Activated CD8-positive, alpha-beta T cell treated with anti-CD3 and anti-CD28 coated beads, Interleukin-2, amount 10 ng/mL, durations not matched to agents 7 days and 5 days (primary cell): ENCODE measurements at regions of chr11 and their contacts with region 1.

Region 1: DNA sequence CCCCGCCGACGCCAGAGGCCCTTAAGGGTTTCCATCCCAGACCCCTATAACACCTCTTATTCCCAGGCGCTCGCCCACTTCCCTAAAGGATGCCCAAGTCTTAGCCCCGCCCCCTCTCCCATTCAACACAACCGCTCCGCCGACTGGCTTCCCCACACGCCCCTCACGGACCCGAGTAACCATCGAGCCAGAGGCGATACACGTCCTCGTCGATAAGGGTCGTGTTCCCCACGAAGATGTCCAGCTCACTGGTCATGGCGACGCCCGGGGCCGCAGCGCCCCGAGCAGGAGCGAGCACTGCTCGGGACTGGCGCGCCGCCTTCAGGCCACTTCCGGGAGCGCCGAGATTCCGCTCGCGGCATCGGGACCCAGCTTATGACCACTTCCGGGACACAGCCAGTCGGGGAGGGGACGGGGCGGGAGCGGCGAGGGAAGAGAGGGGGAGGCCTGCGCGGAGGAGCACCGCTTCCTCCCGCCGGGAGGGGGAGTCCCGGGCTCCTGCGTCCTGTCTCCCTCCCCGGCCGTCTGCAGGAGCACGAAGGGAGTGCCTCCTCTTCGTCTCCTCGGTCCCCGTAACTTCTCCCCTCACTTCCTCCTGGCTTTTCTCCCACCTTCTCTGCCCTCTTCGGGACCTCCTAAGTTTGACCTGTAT is at the start of gene FIBP:
- DNase-seq: peak; percentile 98
- ATAC-seq: peak; percentile 62
- H3K4me3 Mint-ChIP-seq: peak within 1 kb of the TSS; percentile 98
- H3K27ac Mint-ChIP-seq: peak within 1 kb of the TSS; percentile 96
- H3K4me1 Mint-ChIP-seq: peaks cover 70% of the 10 kb centered on the region
- H3K27me3 Mint-ChIP-seq: no peaks in the 10 kb centered on the region
- total RNA-seq, gene FIBP: 80.4 to 89.0 TPM

Region 2: GRCh38 chr11:65698205-65698604 is 190.1 kb before region 1 on chr11:
- CTCF ChIA-PET with region 1: no interaction called
- POLR2A ChIA-PET with region 1: no interaction called
- DNase-seq: no peak
- ATAC-seq: no peak
- H3K4me3 Mint-ChIP-seq: no peak overlapping the region
- H3K27ac Mint-ChIP-seq: no peak overlapping the region
- H3K4me1 Mint-ChIP-seq: no peaks in the 10 kb centered on the region
- H3K27me3 Mint-ChIP-seq: peaks cover 21% of the 10 kb centered on the region

Region 3: DNA sequence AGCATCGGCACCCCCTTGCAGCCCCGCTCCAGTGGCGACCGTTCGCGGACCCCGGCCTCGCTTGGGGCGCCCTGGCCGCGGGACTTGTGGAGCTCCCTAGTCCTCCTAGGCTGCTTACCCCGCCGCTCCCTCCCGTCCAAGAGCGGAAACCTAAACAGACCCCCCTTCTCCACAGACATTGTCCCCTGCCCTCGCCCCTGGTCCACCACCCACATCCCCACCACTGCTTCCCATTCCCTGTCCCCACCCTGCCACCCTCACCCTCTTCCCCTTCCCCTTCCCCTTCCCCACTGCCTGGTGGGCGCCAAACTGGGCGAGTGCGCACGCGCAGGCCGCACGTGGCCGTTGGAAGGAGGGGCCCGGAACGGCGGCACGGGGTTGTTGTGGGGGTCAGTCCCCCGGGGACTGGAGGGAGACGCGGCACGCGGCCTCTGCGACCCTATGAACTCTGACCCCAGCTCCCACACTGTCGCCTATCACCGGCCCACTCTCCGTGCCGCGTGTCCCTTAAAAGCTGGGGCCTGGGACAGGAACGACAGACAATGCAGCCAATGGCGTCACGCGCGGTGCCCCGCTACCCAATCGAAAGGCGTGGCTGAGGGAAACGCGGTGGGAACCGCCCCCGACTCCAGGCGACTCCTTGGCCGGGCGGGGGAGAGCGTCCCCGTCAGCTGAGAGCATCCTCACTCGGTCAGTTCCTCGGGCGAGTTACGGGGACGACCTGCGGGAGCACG is 54.8 kb before region 1 on chr11 and contains the start of gene SNX32:
- CTCF ChIA-PET with region 1: interaction called, 11 read pairs
- POLR2A ChIA-PET with region 1: no interaction called
- DNase-seq: peak; percentile 97
- ATAC-seq: peak; percentile 100
- H3K4me3 Mint-ChIP-seq: no peak within 1 kb of the TSS
- H3K27ac Mint-ChIP-seq: peak within 1 kb of the TSS; percentile 53
- H3K4me1 Mint-ChIP-seq: peaks cover 9% of the 10 kb centered on the region
- H3K27me3 Mint-ChIP-seq: peaks cover 24% of the 10 kb centered on the region
- total RNA-seq, gene SNX32: 0.44 to 1.6 TPM

Region 4: DNA sequence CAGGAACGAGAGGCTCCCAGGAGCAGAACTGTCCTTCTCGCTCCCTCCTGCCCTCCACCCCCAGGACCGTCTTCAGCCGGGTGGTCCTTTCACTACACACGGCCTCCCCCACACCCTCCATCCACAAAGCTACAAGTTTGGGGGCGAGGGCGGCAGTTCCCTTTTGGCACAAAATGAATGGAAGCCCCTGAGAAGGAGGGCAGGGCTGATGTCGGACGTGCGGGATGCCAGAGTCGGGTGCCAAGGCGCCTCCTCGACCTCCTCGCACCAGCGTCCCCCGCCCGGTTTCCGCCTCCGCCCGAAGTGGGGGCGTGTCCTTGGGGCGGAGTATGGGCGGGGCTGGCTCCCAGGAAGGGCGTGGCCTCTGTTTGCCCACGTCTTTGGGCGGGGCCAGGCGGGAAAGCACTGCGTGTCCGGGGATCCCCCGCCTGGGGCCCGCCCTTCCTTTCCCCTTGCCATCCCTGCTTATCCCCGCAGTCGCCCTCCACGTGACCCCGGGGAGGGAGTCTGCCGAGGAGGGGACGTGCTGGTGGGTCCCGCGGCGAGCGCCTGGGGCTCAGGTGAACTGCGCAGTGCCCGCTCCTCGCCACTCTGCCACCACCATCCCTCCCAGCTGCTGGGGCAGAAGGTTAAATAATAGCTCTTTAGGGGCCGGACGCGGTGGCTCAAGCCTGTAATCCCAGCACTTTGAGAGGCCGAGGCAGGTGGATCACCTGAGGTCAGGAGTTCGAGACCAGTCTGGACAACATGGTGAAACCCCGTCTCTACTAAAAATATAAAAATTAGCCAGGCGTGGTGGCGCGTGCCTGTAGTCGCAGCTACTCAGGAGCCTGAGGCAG is 14.8 kb before region 1 on chr11:
- CTCF ChIA-PET with region 1: interaction called, 584 read pairs
- POLR2A ChIA-PET with region 1: interaction called, 46 read pairs
- DNase-seq: peak; percentile 96
- ATAC-seq: peak; percentile 88
- H3K4me3 Mint-ChIP-seq: peak overlapping the region; percentile 83
- H3K27ac Mint-ChIP-seq: peak overlapping the region; percentile 83
- H3K4me1 Mint-ChIP-seq: peaks cover 67% of the 10 kb centered on the region
- H3K27me3 Mint-ChIP-seq: peaks cover 5% of the 10 kb centered on the region

Region 5: DNA sequence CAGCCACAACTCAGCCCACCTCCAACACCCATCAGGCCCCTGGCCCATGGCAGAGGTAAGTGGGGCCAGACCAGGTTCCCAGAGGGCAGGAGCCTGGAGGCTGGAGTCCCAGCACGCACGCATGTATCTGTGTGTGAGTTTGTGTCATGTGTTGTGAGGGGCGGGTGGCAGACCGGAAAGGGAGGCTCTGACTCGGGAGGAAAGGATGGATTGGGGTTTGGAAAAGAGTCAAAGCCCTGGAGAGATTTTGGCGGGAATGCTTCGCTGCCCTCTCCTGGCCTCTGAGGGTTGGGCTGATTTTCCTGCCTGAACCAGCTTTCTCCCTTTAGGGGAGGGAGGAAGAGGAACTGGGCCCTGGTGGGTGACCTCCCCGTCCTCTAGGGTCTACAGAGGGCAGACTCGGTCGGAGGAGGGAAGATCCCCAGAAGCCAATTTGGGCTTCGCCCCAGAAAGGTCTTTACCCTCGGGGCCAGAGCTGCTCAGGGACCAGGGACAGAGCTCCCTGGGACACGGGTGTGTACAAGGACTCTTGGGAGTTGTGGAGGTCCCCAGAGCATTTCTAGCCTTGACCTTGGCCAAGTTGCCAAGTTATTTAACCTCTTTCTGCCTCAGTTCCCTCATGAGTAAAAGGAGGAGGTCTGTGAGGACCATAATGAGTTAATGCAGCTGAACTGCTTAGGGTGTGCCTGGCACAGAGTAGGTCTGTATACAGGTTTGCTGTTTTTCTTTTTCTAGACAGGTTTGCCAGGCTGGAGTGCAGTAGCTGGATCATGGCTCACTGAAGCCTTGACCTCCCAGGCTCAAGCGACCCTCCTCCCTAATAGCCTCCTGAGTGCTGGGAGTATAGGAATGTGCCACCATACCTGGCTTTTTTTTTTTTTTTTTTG is 23.6 kb after region 1 on chr11:
- CTCF ChIA-PET with region 1: interaction called, 41 read pairs
- POLR2A ChIA-PET with region 1: interaction called, 13 read pairs
- DNase-seq: no peak
- ATAC-seq: no peak
- H3K4me3 Mint-ChIP-seq: no peak overlapping the region
- H3K27ac Mint-ChIP-seq: no peak overlapping the region
- H3K4me1 Mint-ChIP-seq: peaks cover 22% of the 10 kb centered on the region
- H3K27me3 Mint-ChIP-seq: no peaks in the 10 kb centered on the region

Region 6: DNA sequence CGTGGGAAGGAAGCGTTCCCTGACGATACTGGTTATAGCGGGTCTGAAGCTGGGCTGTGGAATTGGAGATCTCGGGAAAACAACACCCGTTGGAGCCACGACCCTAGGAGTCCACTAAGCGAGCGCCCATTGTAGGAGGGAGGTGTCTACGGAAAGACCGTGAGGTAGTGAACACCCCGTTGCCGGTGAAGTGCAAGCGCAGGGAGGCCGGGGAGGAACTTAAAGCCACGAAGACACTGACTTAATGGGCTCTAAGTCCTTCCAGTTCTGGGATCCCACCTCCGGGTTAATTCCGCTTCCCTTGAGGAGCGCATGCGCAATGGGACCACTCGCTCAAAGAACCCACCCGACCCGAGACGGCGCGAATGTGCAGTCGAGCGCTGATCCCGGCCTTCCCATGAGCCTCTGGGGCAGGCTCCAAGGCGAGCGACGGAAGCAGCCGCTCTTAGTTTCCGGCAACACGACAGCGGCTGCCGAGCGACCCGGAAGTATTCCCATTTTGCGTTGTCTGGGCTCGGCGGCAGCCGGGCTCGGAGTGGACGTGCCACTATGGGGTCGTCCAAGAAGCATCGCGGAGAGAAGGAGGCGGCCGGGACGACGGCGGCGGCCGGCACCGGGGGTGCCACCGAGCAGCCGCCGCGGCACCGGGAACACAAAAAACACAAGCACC is 73.1 kb after region 1 on chr11 and contains the start of gene SART1:
- CTCF ChIA-PET with region 1: interaction called, 35 read pairs
- POLR2A ChIA-PET with region 1: interaction called, 10 read pairs
- DNase-seq: peak; percentile 98
- ATAC-seq: peak; percentile 94
- H3K4me3 Mint-ChIP-seq: peak within 1 kb of the TSS; percentile 94
- H3K27ac Mint-ChIP-seq: peak within 1 kb of the TSS; percentile 95
- H3K4me1 Mint-ChIP-seq: peaks cover 59% of the 10 kb centered on the region
- H3K27me3 Mint-ChIP-seq: no peaks in the 10 kb centered on the region
- total RNA-seq, gene SART1: 88.0 to 90.3 TPM

Region 7: DNA sequence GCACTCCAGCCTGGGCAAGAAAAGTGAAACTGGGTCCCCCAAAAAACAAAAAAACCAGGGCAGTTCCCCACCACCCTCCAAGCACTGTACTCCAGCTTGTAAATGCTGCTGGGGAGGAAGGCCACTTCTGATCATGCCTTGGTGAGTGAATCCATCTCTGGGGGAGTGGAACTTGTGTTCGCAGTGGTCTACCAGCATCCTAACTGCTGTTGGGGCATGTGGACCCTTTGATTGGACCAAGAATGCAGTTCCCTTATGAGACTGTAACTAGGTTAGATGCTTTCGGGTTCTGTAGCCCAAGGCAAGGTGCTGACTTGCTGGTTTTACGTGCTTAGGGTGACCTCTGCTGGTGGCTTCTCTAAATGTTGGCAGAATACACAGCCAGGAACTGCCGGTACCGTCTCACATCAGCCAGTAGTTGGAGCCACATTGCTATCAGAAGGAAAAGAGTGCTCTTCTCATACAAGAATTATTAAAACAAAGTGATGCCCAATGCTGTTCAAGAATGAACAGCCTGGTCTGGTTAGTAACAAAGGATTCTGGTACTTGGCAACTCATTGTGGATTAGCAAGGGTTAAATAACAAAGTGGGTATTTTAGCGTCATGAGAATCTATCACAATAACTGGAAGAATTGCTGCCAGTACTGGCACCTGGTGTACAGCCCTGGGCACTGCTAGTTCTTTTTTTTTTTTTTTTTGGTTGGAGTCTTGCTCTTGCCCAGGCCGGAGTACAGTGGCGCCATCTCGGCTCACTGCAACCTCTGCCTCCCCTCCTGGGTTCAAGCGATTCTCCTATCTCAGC is 100.7 kb after region 1 on chr11:
- CTCF ChIA-PET with region 1: interaction called, 259 read pairs
- POLR2A ChIA-PET with region 1: interaction called, 8 read pairs
- DNase-seq: peak; percentile 97
- ATAC-seq: peak; percentile 100
- H3K4me3 Mint-ChIP-seq: no peak overlapping the region
- H3K27ac Mint-ChIP-seq: peak overlapping the region; percentile 75
- H3K4me1 Mint-ChIP-seq: peaks cover 9% of the 10 kb centered on the region
- H3K27me3 Mint-ChIP-seq: no peaks in the 10 kb centered on the region

Region 8: DNA sequence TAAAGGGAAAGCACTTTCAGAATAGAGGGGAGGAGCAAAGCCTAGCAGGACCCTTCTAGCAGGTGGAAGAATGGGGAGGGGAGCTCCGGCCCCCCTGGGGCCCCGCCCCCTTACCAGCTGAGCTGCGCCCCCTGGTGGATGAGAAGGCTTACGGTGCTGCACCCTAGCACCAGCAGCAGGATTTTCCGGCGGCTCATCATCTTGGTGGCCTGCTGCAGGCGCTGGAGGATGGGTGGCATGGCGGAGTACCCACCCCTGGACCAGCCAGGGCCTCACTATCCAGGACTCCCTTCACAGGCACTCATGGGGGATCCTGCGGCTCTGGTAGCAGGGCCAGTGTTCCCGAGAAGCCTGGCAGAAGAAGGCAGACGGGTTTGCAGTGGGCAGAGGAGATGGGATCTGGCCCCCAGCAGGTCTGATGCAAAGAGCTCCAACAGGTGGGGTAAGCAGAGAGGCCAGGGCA is 156.9 kb after region 1 on chr11:
- CTCF ChIA-PET with region 1: interaction called, 11 read pairs
- POLR2A ChIA-PET with region 1: no interaction called
- DNase-seq: peak; percentile 86
- ATAC-seq: peak; percentile 95
- H3K4me3 Mint-ChIP-seq: no peak overlapping the region
- H3K27ac Mint-ChIP-seq: no peak overlapping the region
- H3K4me1 Mint-ChIP-seq: peaks cover 14% of the 10 kb centered on the region
- H3K27me3 Mint-ChIP-seq: peaks cover 11% of the 10 kb centered on the region